ENCODE measurements at regions of chr5 and their contacts with region 1.

Region 1: GRCh38 chr5:17189381-17190036 is 27.9 kb upstream of the BASP1 start:
- DNase-seq: peak; percentile 56 to 86
- H3K4me3 ChIP-seq: no peak overlapping the region
- H3K27ac ChIP-seq: no peak overlapping the region
- H3K4me1 ChIP-seq: peaks cover 10% of the 10 kb centered on the region
- H3K27me3 ChIP-seq: no peaks in the 10 kb centered on the region
- CTCF ChIP-seq: peak; percentile 99

Region 2: GRCh38 chr5:16539169-16539721 is 650.3 kb before region 1 on chr5:
- CTCF ChIA-PET with region 1: no interaction called
- POLR2A ChIA-PET with region 1: no interaction called
- intact Hi-C with region 1: loop called (anchors 1 kb)
- DNase-seq: peak; percentile 69 to 82
- H3K4me3 ChIP-seq: no peak overlapping the region
- H3K27ac ChIP-seq: peak overlapping the region; percentile 47
- H3K4me1 ChIP-seq: peaks cover 24% of the 10 kb centered on the region
- H3K27me3 ChIP-seq: no peaks in the 10 kb centered on the region
- CTCF ChIP-seq: no peak

Region 3: GRCh38 chr5:16690243-16690852 is 499.2 kb before region 1 on chr5:
- CTCF ChIA-PET with region 1: interaction called, 3 read pairs
- POLR2A ChIA-PET with region 1: no interaction called
- intact Hi-C with region 1: loop called (anchors 1 kb)
- DNase-seq: peak in 1 of 2 experiments; percentile 66
- H3K4me3 ChIP-seq: no peak overlapping the region
- H3K27ac ChIP-seq: no peak overlapping the region
- H3K4me1 ChIP-seq: no peaks in the 10 kb centered on the region
- H3K27me3 ChIP-seq: no peaks in the 10 kb centered on the region
- CTCF ChIP-seq: peak; percentile 85

Region 4: DNA sequence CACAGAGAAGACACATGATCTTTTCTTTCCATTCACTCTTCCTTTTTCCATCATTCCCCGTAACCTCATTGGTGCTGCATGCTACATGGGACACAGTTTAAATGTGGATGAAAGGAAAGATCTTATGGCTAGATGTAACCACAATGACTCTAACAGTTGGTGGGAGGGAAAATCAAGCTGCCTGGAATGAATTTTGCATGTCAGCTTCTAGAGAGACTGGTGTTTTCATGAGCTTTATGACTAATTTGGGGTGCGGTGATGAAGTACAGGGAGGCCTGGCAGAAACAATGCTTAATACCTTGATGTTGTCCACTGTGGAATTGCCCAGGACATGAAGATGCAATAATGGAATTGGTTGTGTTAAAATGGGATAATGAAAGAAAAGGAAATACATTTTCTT is 197.5 kb before region 1 on chr5:
- CTCF ChIA-PET with region 1: interaction called, 26 read pairs
- POLR2A ChIA-PET with region 1: no interaction called
- intact Hi-C with region 1: no loop called
- DNase-seq: peak in 1 of 2 experiments; percentile 25
- H3K4me3 ChIP-seq: no peak overlapping the region
- H3K27ac ChIP-seq: no peak overlapping the region
- H3K4me1 ChIP-seq: no peaks in the 10 kb centered on the region
- H3K27me3 ChIP-seq: no peaks in the 10 kb centered on the region
- CTCF ChIP-seq: no peak

Region 5: GRCh38 chr5:17056056-17056690 is 133.3 kb before region 1 on chr5:
- CTCF ChIA-PET with region 1: interaction called, 4 read pairs
- POLR2A ChIA-PET with region 1: no interaction called
- intact Hi-C with region 1: loop called (anchors 5 kb)
- DNase-seq: peak; percentile 5 to 49
- H3K4me3 ChIP-seq: no peak overlapping the region
- H3K27ac ChIP-seq: no peak overlapping the region
- H3K4me1 ChIP-seq: peaks cover 34% of the 10 kb centered on the region
- H3K27me3 ChIP-seq: no peaks in the 10 kb centered on the region
- CTCF ChIP-seq: no peak

Region 6: DNA sequence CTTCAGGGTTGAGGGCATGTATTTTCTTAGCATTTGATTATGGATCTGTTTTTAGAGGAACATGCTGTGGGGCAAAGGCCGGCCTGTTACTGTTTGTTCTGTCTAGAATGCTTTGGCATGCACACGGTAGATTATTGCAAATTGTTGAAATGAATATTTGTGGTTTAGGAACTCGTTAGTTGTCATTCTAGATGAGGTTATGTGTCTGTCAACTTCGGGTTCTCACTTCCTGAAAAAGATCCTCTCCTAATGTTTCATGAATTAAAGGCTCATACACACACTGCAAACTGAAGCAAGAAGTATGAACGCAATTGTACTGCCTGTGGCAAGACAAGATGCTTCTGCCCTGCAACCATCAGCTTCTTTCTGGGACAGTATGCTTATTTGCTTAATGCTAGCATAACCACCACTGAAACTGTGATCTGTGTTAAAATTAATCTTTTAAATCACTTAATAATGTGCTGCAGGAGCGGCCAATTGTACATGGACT is 127.5 kb after region 1 on chr5:
- CTCF ChIA-PET with region 1: interaction called, 15 read pairs
- POLR2A ChIA-PET with region 1: no interaction called
- intact Hi-C with region 1: no loop called
- DNase-seq: peak; percentile 50 to 76
- H3K4me3 ChIP-seq: peak overlapping the region; percentile 6; the same call in 1 of the 2 replicates
- H3K27ac ChIP-seq: peak overlapping the region; percentile 33; the same call in 1 of the 2 replicates
- H3K4me1 ChIP-seq: peaks cover 48% of the 10 kb centered on the region
- H3K27me3 ChIP-seq: no peaks in the 10 kb centered on the region
- CTCF ChIP-seq: no peak

Measured in PC-9 (cell line).